Motor neuron (in vitro differentiated cells): ENCODE measurements at regions of chr4 and their contacts with region 1.

Region 1: DNA sequence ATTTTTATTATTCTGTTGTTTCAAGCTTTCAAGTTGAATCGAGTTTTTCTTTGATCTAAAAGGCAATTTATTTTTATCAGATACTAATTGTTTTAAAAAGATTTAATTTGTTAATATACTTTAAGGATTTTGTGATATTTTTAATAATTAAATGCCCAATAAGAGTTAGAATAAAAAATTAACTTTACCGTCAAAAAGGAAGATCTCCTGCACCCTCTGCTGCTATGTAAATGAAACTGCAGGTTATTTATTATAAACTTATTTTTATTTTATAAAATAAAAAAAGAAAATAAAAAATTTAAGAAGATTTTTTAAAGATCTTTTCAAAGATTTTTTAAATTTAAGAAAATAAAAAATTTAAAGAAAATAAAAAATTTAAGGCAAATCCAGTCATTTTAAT is 166.1 kb downstream of the CCSER1 start:
- ATAC-seq: no peak
- H3K4me3 ChIP-seq: no peak overlapping the region
- H3K27ac ChIP-seq: no peak overlapping the region
- H3K4me1 ChIP-seq: peaks cover 0 to 3% of the 10 kb centered on the region in 2 donors

Region 2: DNA sequence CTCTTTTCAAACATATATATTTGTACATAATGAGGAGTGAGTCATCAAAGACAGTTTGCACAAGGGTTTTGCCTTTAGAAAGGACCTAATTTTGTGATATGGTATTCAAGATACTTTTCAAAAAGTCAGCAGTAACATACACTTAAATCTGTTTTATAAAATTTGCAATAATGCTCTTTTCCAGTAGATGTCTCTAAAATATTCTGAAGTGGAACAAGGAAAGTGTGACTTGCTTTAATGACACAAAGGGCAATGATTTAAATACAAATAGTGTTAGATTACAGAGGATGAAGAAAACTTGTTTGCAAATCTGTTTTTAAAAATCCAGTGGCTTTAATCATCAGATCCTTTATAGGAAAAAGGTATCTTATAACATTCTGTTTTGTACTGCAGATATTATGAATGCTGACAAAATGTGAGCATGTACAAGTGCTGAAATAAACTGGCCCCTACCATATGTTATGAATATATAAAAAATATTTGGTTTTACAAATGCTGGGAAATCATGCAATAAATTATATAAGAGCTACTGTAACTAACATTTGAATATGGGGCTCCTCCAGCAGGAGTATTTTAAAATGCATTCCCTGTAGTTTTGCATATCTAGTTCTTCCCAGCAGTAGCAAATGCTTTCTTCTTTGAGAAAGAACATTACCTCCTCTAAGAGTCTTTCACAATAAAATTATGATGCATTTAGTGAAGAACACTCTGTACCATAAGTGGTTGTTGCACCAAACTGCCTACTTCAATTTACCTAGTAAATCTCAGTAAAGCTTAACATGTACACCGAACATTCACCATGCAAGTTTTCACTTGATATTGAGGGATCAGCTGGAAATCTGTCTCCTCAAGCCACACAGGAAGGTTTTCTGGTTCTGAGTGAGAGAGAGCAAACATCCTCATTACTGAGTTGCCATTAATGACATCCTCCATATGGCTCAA is 378.4 kb before region 1 on chr4:
- in situ Hi-C with region 1: loop called in 1 of 9 experiments (anchors 25 kb)
- ATAC-seq: peak in 3 of 8 experiments; percentile 62 to 85 (median 70)
- H3K4me3 ChIP-seq: no peak overlapping the region
- H3K27ac ChIP-seq: peak overlapping the region in 1 of 2 donors; percentile 3
- H3K4me1 ChIP-seq: peaks cover 10 to 30% of the 10 kb centered on the region in 2 donors

Region 3: DNA sequence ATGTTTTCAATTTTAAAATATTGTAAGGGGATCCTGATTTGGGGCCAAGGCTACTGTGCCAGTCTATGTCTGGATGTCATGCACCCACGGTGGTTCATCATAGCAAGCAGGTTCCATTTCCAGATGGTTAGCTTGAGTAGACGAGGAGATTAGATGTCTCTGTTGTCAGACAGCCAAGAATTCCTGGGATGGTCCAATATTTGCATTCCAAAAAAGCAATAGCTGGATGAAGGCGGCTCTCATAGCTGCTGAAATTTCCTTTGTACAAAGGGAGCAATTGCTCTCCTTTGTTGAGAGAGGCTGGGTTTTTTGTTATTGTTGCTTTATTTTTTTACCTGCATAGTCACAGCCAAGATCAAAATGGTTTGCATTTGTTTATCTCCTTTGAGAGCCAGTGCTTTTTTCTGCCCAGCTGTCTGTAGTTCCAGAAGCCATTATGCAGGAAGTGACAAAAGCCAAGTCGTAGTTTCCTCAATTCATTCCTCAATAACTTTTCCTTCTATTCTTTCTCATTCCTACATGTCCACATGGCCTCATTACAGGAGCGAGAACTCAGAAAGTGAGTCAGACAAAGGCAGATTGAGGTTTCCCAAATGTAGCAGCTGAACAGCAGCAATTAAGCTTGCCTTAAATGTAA is 290.8 kb before region 1 on chr4:
- in situ Hi-C with region 1: loop called in 2 of 9 experiments (anchors 25 kb)
- ATAC-seq: peak in 6 of 8 experiments; percentile 33 to 73 (median 57)
- H3K4me3 ChIP-seq: no peak overlapping the region
- H3K27ac ChIP-seq: no peak overlapping the region
- H3K4me1 ChIP-seq: peaks cover 16 to 26% of the 10 kb centered on the region in 2 donors

Region 4: DNA sequence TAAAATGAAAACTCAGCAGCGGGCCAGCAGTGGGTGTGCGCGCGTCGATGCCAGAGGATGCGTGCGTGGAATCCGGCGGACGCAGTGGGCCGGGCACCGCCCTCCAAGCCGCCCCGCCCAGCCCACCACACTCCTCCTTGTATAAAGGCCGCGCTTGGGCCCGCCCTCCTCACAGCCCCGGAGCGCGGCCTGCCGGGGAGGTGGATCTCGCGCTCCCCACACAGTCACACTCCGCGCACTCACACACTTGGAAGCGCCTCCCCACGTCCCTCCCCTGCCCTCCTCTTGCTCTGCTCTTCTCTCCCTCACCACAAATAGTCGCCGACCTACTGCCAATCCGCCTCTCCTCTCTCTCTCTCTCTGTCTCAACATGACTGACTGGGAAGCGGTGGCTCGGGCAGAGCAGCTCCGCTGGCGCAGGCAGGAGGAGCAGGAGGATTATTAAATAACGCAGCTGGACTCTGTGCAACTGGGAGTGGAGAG is 166.1 kb before region 1 on chr4 and contains the start of gene CCSER1:
- in situ Hi-C with region 1: loop called in 1 of 9 experiments (anchors 25 kb)
- ATAC-seq: peak; percentile 77 to 89 (median 87)
- H3K4me3 ChIP-seq: peak within 1 kb of the TSS; percentile 60 to 67 (median 64)
- H3K27ac ChIP-seq: peak within 1 kb of the TSS; percentile 86 to 91
- H3K4me1 ChIP-seq: peaks cover 0 to 14% of the 10 kb centered on the region in 2 donors
- total RNA-seq, gene CCSER1: 6.9 to 59.5 (median 25.8) TPM